CD14-positive monocyte (primary cell): ENCODE measurements at regions of chr19 and their contacts with region 1.

Region 1: GRCh38 chr19:49580264-49581006 is at the start of gene NOSIP:
- DNase-seq: peak; percentile 95 to 98 (median 96)
- H3K4me3 ChIP-seq: peak within 1 kb of the TSS; percentile 65 to 96 (median 84)
- H3K4me3 Mint-ChIP-seq: peak within 1 kb of the TSS; percentile 94 to 98
- H3K27ac ChIP-seq: peak within 1 kb of the TSS; percentile 9 to 67
- H3K27ac Mint-ChIP-seq: peak within 1 kb of the TSS; percentile 91 to 97 (median 93)
- H3K4me1 ChIP-seq: peaks cover 16 to 20% of the 10 kb centered on the region in 2 donors
- H3K4me1 Mint-ChIP-seq: peaks cover 22% of the 10 kb centered on the region
- H3K27me3 ChIP-seq: no peaks in the 10 kb centered on the region
- H3K27me3 Mint-ChIP-seq: peaks cover 0 to 2% (median 0%) of the 10 kb centered on the region in 3 donors
- CTCF ChIP-seq: no peak
- polyA plus RNA-seq, gene NOSIP: 63.4 to 120 (median 96.4) TPM

Region 2: GRCh38 chr19:49475995-49476880 is 104.2 kb before region 1 on chr19:
- intact Hi-C with region 1: no loop called
- DNase-seq: peak in 2 of 3 donors; percentile 31 to 49
- H3K4me3 ChIP-seq: no peak overlapping the region
- H3K4me3 Mint-ChIP-seq: peak overlapping the region in 1 of 2 donors; percentile 12
- H3K27ac ChIP-seq: no peak overlapping the region
- H3K27ac Mint-ChIP-seq: peak overlapping the region in 4 of 7 donors; percentile 14 to 72 (median 40)
- H3K4me1 ChIP-seq: peaks cover 14 to 25% of the 10 kb centered on the region in 2 donors
- H3K4me1 Mint-ChIP-seq: peaks cover 31% of the 10 kb centered on the region
- H3K27me3 ChIP-seq: no peaks in the 10 kb centered on the region
- H3K27me3 Mint-ChIP-seq: peaks cover 2 to 13% (median 6%) of the 10 kb centered on the region in 3 donors
- CTCF ChIP-seq: peak; percentile 64

Region 3: DNA sequence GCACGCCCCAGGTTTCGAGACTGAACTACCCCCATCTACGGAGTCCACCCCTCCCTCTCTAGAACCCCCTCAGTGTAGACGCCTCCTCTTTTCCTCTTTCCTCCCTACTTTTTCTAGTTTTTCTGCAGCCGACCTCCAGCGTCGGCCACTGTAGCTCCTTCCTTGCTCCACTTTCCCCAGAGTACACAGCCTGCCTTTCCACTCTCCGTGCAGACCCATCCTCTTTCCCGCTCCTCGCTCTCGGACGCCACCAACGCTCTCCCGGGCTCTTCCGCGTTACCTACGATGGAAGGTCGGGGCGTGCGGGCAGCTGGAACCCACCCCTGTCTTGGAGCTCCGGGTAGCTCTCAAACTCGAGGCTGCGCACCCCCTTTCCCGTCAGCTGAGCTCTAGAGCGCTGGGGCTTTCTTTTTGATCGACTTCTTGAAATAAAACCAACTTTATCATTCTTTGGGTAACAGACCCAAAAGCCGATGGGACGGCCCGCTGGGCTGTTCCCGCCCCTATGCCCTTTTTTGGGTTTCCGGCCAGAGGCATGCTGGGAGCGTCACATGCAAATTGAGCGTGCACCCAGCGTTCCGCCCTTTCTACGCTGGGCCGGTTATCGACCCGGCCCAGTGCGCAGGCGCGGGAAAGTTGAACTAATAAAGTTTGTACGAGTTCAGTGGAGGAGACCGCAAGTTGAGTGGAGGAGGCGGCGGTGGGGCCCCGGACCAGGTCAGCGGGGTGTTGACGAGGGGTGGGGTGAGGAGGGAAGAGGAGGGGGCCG is 85.1 kb after region 1 on chr19 and contains the starts of genes BCL2L12 and IRF3:
- intact Hi-C with region 1: loop called in 1 of 2 experiments (anchors 1 kb)
- DNase-seq: peak; percentile 95 to 97 (median 95)
- H3K4me3 ChIP-seq: peak within 1 kb of the TSS; percentile 52 to 94 (median 72)
- H3K4me3 Mint-ChIP-seq: peak within 1 kb of the TSS; percentile 97 to 100
- H3K27ac ChIP-seq: peak within 1 kb of the TSS; percentile 52 to 78
- H3K27ac Mint-ChIP-seq: peak within 1 kb of the TSS; percentile 89 to 99 (median 94)
- H3K4me1 ChIP-seq: peaks cover 17 to 35% of the 10 kb centered on the region in 2 donors
- H3K4me1 Mint-ChIP-seq: peaks cover 32% of the 10 kb centered on the region
- H3K27me3 ChIP-seq: no peaks in the 10 kb centered on the region
- H3K27me3 Mint-ChIP-seq: no peaks in the 10 kb centered on the region
- CTCF ChIP-seq: no peak
- polyA plus RNA-seq, gene BCL2L12: 5.7 to 10.3 (median 8.6) TPM
- polyA plus RNA-seq, gene IRF3: 29.8 to 115 (median 41.1) TPM